Heart left ventricle (tissue), 16 donors: ENCODE measurements at regions of chr11 and their contacts with region 1.

Region 1: GRCh38 chr11:124622531-124623451 is at the start of gene TBRG1:
- DNase-seq: peak; percentile 91 to 93 (median 92)
- ATAC-seq: peak; percentile 98 to 100 (median 99)
- H3K4me3 ChIP-seq: peak within 1 kb of the TSS; percentile 58 to 98 (median 88)
- H3K27ac ChIP-seq: peak within 1 kb of the TSS; percentile 73 to 96 (median 91)
- H3K4me1 ChIP-seq: peaks cover 4 to 32% (median 20%) of the 10 kb centered on the region in 12 donors
- H3K27me3 ChIP-seq: no peaks in the 10 kb centered on the region
- CTCF ChIP-seq: no peak
- POLR2A ChIP-seq: peak; percentile 72 to 93
- total RNA-seq, gene TBRG1: 13.9 to 24.9 (median 19.8) TPM

Region 2: DNA sequence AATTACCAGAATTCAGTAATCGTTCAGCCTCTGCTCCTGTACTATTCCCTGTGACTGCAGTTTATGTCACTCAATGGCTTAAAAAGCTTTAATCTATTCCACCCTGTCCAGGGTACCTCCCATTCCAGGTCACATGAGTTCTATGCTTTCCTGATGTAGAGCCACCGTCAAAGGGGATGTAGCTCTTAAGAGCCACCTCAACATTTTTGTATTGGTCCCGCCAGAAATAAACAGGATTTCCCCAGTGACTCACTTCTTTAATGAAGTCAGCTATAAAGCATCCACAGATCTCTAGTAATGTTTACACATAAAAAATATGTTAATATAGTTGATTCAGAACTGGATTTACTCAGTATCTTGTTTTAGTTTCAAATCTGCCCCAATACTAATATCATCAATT is 307.7 kb before region 1 on chr11:
- intact Hi-C with region 1: no loop called
- DNase-seq: no peak
- ATAC-seq: no peak
- H3K4me3 ChIP-seq: no peak overlapping the region
- H3K27ac ChIP-seq: no peak overlapping the region
- H3K4me1 ChIP-seq: no peaks in the 10 kb centered on the region
- H3K27me3 ChIP-seq: peaks cover 0 to 7% (median 0%) of the 10 kb centered on the region in 9 donors
- CTCF ChIP-seq: no peak
- POLR2A ChIP-seq: no peak

Region 3: DNA sequence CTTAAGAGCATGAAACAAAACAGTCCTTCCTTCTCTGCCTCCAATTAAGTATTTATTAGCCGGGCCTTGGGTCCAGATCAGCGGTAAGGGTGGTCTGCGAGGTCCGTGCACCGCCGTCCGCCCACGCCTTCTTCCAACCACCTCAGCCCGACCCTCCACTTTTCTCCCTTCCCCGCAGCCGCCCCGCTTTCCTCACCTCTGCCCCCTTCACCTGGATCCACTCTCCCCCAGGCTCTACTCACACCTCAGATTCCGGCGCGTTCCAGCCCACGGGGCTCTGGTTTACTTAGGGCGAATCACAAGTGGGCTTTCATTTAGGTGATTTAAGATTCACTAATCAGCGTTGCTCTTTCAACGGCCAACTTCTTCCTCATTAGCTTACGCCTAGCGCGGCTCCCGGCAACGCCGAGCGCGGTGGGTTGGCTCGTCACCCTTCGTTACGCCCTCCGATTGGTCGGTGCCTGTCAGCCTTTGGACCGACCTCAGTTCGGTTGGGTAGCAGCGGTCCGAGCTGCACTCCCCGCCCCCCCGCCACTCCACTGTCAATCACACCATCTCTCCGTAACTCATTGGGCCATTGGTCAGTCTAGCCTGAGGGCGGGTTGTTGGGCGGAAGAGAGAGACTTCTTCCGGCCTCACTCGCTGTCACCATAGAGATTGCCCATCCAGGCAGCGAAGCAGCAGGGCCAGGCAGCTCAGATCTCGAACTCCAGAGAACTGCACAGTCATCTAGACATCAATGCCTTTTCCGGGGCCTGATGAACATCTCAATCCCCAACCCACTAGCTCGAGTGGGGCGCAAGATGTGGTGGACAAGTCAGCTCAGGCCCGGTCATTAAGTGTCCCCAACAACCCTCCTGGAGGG is 488.8 kb after region 1 on chr11 and contains the start of gene TMEM218:
- intact Hi-C with region 1: loop called in 1 of 10 experiments (anchors 10 kb)
- DNase-seq: peak; percentile 99 to 100 (median 100)
- ATAC-seq: peak; percentile 100
- H3K4me3 ChIP-seq: peak within 1 kb of the TSS; percentile 53 to 97 (median 81)
- H3K27ac ChIP-seq: peak within 1 kb of the TSS in 11 of 12 donors; percentile 52 to 84 (median 78)
- H3K4me1 ChIP-seq: peaks cover 0 to 17% (median 7%) of the 10 kb centered on the region in 12 donors
- H3K27me3 ChIP-seq: no peaks in the 10 kb centered on the region
- CTCF ChIP-seq: no peak
- POLR2A ChIP-seq: no peak
- total RNA-seq, gene TMEM218: 5.3 to 11.3 (median 6.8) TPM